Dorsolateral prefrontal cortex (tissue), 120 donors: ENCODE measurements at regions of chr14 and their contacts with region 1.

Region 1: GRCh38 chr14:60091550-60092530 is at the start of gene PCNX4:
- DNase-seq: peak; percentile 93 to 98 (median 96)
- H3K4me3 ChIP-seq: peak within 1 kb of the TSS; percentile 67 to 98 (median 86)
- H3K27ac ChIP-seq: peak within 1 kb of the TSS; percentile 90 to 100 (median 98)
- H3K27me3 ChIP-seq: no peaks in the 10 kb centered on the region
- CTCF ChIP-seq: peak in 29 of 56 donors; percentile 3 to 47 (median 27)
- total RNA-seq, gene PCNX4: 40.1 to 76.5 (median 55.8) TPM

Region 2: GRCh38 chr14:59483900-59484638 is 607.8 kb before region 1 on chr14 and contains the starts of genes JKAMP and L3HYPDH:
- intact Hi-C with region 1: loop called (anchors 5 to 10 kb)
- DNase-seq: peak; percentile 95 to 98 (median 95)
- H3K4me3 ChIP-seq: peak within 1 kb of the TSS; percentile 70 to 98 (median 92)
- H3K27ac ChIP-seq: peak within 1 kb of the TSS; percentile 82 to 99 (median 96)
- H3K27me3 ChIP-seq: no peaks in the 10 kb centered on the region
- CTCF ChIP-seq: peak; percentile 39 to 84 (median 68)
- total RNA-seq, gene JKAMP: 25.5 to 66.0 (median 46.4) TPM
- total RNA-seq, gene L3HYPDH: 23.2 to 57.8 (median 38.6) TPM

Region 3: GRCh38 chr14:59964251-59965007 is 127.4 kb before region 1 on chr14:
- intact Hi-C with region 1: loop called in 1 of 2 experiments (anchors 10 kb)
- DNase-seq: no peak
- H3K4me3 ChIP-seq: peak overlapping the region in 39 of 59 donors; percentile 38 to 72 (median 57)
- H3K27ac ChIP-seq: peak overlapping the region in 12 of 59 donors; percentile 1 to 92 (median 67)
- H3K27me3 ChIP-seq: no peaks in the 10 kb centered on the region
- CTCF ChIP-seq: no peak

Region 4: DNA sequence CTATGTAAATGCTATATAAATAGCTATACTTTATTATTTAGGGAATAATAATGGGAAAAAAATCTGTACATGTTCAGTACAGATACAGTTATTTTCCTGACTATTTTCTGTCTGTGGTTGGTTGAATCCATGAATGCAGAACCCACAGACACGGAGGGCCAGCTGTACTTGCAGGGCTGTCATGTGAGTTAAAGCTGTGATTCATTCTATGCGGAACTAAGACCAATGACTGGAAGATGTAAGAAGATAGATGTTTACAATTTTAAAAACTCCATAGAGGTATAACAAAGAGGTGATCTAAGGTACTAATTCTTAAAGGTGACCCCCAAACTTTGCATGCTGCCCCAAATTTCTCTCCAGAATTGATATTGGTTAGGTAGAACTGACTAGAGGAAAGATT is 14.5 kb after region 1 on chr14:
- intact Hi-C with region 1: loop called in 1 of 2 experiments (anchors 2 kb)
- DNase-seq: peak in 6 of 10 donors; percentile 32 to 67 (median 47)
- H3K4me3 ChIP-seq: peak overlapping the region in 9 of 59 donors; percentile 1 to 24 (median 14)
- H3K27ac ChIP-seq: peak overlapping the region in 54 of 59 donors; percentile 2 to 89 (median 64)
- H3K27me3 ChIP-seq: no peaks in the 10 kb centered on the region
- CTCF ChIP-seq: no peak

Region 5: DNA sequence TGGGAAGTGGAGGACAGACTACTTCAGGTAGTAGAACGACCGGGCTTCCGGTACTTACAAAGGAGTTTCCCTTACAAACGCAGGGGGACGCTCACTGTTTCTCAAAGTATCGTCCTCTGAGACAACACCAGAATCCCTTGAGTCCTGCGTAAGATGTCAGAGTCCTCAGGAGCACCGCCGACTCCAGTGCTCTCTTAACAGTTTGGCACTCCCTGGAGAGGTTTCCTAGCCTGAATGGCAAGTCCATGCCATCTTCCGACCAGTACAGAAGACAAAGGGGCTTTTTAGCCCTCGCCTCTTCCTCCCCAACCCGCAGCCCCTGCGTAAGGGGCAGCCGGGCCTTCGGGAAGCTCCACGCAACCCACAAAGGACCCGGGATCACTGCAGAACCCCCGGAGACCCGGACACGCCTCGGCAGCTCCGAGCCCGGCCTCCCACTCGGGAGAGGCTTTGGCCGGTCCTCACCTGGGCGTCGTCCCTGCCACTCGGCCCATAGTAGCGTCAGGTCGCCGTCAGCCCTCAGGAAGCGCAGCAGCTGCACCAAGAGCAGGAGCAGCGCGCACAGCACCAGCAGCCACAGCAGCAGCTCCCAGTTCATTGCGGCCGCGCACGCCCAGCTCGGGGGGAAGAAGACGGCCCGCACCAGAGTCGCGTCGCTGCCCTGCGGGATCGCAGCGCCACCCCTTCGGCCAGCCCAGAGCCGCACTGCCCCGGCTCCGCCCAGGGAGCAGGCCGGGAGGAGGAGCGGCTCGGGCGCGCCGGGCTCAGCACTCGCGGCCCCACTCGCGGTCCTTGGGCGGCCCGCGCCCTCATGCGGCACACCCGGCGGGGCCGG is 73.1 kb after region 1 on chr14 and contains the start of gene DHRS7:
- intact Hi-C with region 1: loop called (anchors 2 kb)
- DNase-seq: peak; percentile 72 to 89 (median 82)
- H3K4me3 ChIP-seq: peak within 1 kb of the TSS; percentile 62 to 99 (median 88)
- H3K27ac ChIP-seq: peak within 1 kb of the TSS; percentile 81 to 99 (median 95)
- H3K27me3 ChIP-seq: no peaks in the 10 kb centered on the region
- CTCF ChIP-seq: peak in 54 of 56 donors; percentile 7 to 92 (median 69)
- total RNA-seq, gene DHRS7: 37.5 to 72.7 (median 57.7) TPM

Region 6: DNA sequence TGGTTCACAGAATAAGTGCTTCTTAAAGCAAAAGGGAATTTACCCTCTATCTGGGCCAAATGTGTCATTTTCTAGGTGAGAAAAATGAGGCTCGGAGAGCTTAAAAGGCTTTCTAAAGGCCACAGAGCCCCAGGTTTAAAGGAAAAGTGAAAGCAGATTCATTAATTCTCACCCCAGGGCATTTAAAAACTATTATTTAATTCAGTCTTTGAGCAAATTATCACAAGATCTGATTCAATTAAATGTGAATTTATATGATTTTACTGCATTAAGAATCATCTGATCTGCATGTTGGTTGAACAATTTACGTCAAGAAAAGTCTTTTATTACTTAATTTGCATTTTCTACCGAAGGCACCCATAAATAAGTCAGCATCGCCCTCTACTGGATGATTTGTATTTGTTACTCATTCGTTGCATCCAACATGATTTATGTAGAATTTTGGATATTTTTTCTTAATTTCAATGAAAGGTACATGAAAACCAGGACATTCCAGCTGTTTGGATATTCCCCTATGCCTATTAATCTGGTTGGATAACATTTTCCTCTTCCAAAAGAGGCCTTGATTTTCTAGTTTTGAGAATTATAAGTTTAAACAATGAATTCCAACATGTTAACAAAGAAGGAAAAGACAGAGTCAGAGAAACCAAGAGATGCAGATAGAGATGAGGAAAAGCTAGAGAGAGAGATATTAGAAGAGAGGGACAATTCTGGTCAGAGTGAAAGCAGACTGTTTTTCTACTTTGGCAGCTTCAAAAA is 92.5 kb after region 1 on chr14:
- intact Hi-C with region 1: loop called in 1 of 2 experiments (anchors 5 kb)
- DNase-seq: no peak
- H3K4me3 ChIP-seq: peak overlapping the region; percentile 20 to 71 (median 54)
- H3K27ac ChIP-seq: peak overlapping the region in 37 of 59 donors; percentile 3 to 77 (median 42)
- H3K27me3 ChIP-seq: no peaks in the 10 kb centered on the region
- CTCF ChIP-seq: peak; percentile 69 to 98 (median 88)

Region 7: GRCh38 chr14:60430276-60430675 is 338.4 kb after region 1 on chr14:
- intact Hi-C with region 1: no loop called
- DNase-seq: no peak
- H3K4me3 ChIP-seq: no peak overlapping the region
- H3K27ac ChIP-seq: no peak overlapping the region
- H3K27me3 ChIP-seq: no peaks in the 10 kb centered on the region
- CTCF ChIP-seq: no peak